ENCODE measurements at regions of chr20 and their contacts with region 1.

Region 1: GRCh38 chr20:35954200-35954906 is at the start of gene SCAND1:
- DNase-seq: peak; percentile 94 to 99 (median 97)
- H3K4me3 ChIP-seq: peak within 1 kb of the TSS; percentile 83
- H3K4me3 Mint-ChIP-seq: peak within 1 kb of the TSS; percentile 97 to 100 (median 99)
- H3K27ac ChIP-seq: peak within 1 kb of the TSS; percentile 97
- H3K27ac Mint-ChIP-seq: peak within 1 kb of the TSS; percentile 94 to 100 (median 100)
- H3K4me1 ChIP-seq: peaks cover 27% of the 10 kb centered on the region
- H3K4me1 Mint-ChIP-seq: peaks cover 15 to 37% (median 26%) of the 10 kb centered on the region in 3 donors
- H3K27me3 ChIP-seq: no peaks in the 10 kb centered on the region
- H3K27me3 Mint-ChIP-seq: peaks cover 0 to 3% of the 10 kb centered on the region in 2 donors
- total RNA-seq, gene SCAND1: 50.8 to 55.8 TPM

Region 2: DNA sequence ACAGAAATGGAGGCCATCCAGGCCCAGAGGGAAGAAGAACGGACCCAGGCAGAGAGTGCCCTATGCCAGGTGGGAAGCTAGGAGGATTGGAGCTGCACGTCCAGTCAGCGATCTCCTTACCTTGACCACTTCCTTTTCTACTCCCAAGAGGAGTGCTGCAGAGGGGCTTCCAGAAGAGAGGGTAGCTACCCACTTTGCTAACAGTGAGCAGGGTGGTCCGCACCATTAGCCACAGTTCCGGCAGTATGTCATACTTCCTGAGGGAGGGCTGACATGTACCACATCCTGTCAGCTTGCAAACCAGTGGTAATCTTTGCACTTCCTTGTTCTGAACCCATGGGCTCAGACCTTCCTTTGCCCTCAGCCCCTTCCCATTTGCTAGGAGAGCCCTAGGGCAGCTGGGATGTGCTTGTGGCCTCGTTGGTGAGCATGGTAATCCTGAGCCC is 463.6 kb before region 1 on chr20:
- CTCF ChIA-PET with region 1: interaction called, 6 read pairs
- POLR2A ChIA-PET with region 1: interaction called, 14 read pairs
- DNase-seq: peak; percentile 42 to 81 (median 68)
- H3K4me3 ChIP-seq: peak overlapping the region; percentile 99
- H3K4me3 Mint-ChIP-seq: peak overlapping the region; percentile 96 to 99 (median 99)
- H3K27ac ChIP-seq: peak overlapping the region; percentile 96
- H3K27ac Mint-ChIP-seq: peak overlapping the region; percentile 95 to 99 (median 99)
- H3K4me1 ChIP-seq: peaks cover 49% of the 10 kb centered on the region
- H3K4me1 Mint-ChIP-seq: peaks cover 59 to 80% (median 68%) of the 10 kb centered on the region in 3 donors
- H3K27me3 ChIP-seq: no peaks in the 10 kb centered on the region
- H3K27me3 Mint-ChIP-seq: no peaks in the 10 kb centered on the region

Region 3: GRCh38 chr20:35664544-35665221 is 289.7 kb before region 1 on chr20 and contains the starts of genes CPNE1 and RBM12:
- CTCF ChIA-PET with region 1: interaction called, 3 read pairs
- POLR2A ChIA-PET with region 1: interaction called, 10 read pairs
- DNase-seq: peak; percentile 88 to 96 (median 93)
- H3K4me3 ChIP-seq: peak within 1 kb of the TSS; percentile 95
- H3K4me3 Mint-ChIP-seq: peak within 1 kb of the TSS; percentile 86 to 98 (median 96)
- H3K27ac ChIP-seq: peak within 1 kb of the TSS; percentile 98
- H3K27ac Mint-ChIP-seq: peak within 1 kb of the TSS; percentile 94 to 100 (median 99)
- H3K4me1 ChIP-seq: peaks cover 41% of the 10 kb centered on the region
- H3K4me1 Mint-ChIP-seq: peaks cover 47 to 49% (median 49%) of the 10 kb centered on the region in 3 donors
- H3K27me3 ChIP-seq: no peaks in the 10 kb centered on the region
- H3K27me3 Mint-ChIP-seq: no peaks in the 10 kb centered on the region
- total RNA-seq, gene CPNE1: 295 to 305 TPM
- total RNA-seq, gene RBM12: 103 to 110 TPM

Region 4: GRCh38 chr20:35771689-35772562 is 182.4 kb before region 1 on chr20 and contains the start of gene PHF20:
- CTCF ChIA-PET with region 1: interaction called, 10 read pairs
- POLR2A ChIA-PET with region 1: interaction called, 17 read pairs
- DNase-seq: peak; percentile 99 to 100 (median 100)
- H3K4me3 ChIP-seq: peak within 1 kb of the TSS; percentile 84
- H3K4me3 Mint-ChIP-seq: peak within 1 kb of the TSS; percentile 84 to 94 (median 86)
- H3K27ac ChIP-seq: peak within 1 kb of the TSS; percentile 95
- H3K27ac Mint-ChIP-seq: peak within 1 kb of the TSS; percentile 98 to 100 (median 100)
- H3K4me1 ChIP-seq: peaks cover 90% of the 10 kb centered on the region
- H3K4me1 Mint-ChIP-seq: peaks cover 68 to 90% (median 79%) of the 10 kb centered on the region in 3 donors
- H3K27me3 ChIP-seq: no peaks in the 10 kb centered on the region
- H3K27me3 Mint-ChIP-seq: peaks cover 0 to 3% of the 10 kb centered on the region in 2 donors
- total RNA-seq, gene PHF20: 53.9 to 54.3 TPM

Region 5: DNA sequence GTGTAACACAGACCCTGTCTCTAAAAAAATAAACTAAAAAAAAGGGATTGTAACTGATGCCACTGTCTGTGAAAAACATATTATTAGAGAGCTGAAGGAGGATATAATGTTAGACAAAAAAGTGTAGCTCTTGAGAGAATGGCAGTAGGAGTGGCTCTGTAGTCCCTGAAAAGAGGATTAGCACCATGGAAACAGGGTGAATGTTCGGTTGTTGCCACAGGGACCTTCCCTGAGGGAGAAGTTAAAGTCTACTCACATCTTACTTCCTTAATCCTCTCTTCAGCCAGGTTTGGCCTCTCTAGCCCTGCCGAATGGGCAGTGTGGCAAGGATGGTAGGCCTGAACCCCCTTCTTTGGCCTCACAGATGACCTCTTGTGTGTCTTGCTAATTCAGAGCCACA is 12.1 kb before region 1 on chr20:
- CTCF ChIA-PET with region 1: interaction called, 15 read pairs
- POLR2A ChIA-PET with region 1: interaction called, 5 read pairs
- DNase-seq: no peak
- H3K4me3 ChIP-seq: no peak overlapping the region
- H3K4me3 Mint-ChIP-seq: no peak overlapping the region
- H3K27ac ChIP-seq: no peak overlapping the region
- H3K27ac Mint-ChIP-seq: peak overlapping the region in 1 of 8 donors; percentile 26
- H3K4me1 ChIP-seq: no peaks in the 10 kb centered on the region
- H3K4me1 Mint-ChIP-seq: peaks cover 0 to under 1% (median 0%) of the 10 kb centered on the region in 3 donors
- H3K27me3 ChIP-seq: no peaks in the 10 kb centered on the region
- H3K27me3 Mint-ChIP-seq: no peaks in the 10 kb centered on the region

Measured in CD8-positive, alpha-beta memory T cell (primary cell).